Activated B cell treated with CpG ODN at 0.5 μM for 24 hours (primary cell): ENCODE measurements at regions of chr22 and their contacts with region 1.

Region 1: DNA sequence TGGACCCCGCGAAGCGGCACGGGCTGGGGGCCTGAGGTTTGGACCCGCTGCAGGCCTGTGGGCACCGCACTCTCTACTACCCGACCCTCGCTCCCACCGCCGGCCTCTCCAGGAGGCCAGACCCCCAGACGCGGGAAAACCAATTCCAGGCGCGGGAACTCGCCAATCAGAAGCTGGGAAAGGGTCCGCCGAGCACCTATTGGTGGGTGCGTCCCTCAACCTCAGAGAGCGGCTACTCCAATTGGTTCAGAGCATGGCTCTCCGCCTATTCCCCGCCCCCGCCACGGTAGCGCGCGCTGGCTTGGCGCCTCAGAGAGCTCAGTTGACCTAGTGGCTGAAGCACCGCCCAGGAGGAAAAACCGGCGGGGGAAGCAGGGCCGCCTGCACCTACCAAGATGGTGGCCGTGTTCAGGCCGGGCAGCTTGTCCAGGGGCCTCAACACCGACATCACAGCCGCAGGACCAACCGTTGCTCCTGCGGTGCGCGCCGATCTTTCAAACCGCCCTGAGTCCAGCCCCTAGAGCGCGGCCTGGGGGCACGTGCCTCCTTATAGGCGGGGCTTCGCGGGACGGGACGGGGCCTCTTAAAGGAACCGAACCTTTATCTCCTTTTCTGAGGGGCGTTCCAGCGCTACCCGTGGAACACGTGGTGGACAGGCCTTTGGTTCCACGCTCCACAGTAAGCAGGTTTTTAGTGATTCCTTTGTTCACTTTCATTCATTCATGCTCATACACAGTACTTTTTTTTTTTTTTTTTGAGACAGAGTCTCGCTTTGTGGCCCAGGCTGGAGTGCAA is at the start of gene CENPM:
- DNase-seq: peak; percentile 84
- ATAC-seq: peak; percentile 91
- H3K4me3 Mint-ChIP-seq: peak within 1 kb of the TSS; percentile 91
- H3K27ac Mint-ChIP-seq: peak within 1 kb of the TSS; percentile 80
- H3K4me1 Mint-ChIP-seq: peaks cover 52% of the 10 kb centered on the region
- H3K27me3 Mint-ChIP-seq: no peaks in the 10 kb centered on the region
- CTCF ChIP-seq: no peak
- total RNA-seq, gene CENPM: 9.6 and 13.3 TPM in 2 replicates

Region 2: DNA sequence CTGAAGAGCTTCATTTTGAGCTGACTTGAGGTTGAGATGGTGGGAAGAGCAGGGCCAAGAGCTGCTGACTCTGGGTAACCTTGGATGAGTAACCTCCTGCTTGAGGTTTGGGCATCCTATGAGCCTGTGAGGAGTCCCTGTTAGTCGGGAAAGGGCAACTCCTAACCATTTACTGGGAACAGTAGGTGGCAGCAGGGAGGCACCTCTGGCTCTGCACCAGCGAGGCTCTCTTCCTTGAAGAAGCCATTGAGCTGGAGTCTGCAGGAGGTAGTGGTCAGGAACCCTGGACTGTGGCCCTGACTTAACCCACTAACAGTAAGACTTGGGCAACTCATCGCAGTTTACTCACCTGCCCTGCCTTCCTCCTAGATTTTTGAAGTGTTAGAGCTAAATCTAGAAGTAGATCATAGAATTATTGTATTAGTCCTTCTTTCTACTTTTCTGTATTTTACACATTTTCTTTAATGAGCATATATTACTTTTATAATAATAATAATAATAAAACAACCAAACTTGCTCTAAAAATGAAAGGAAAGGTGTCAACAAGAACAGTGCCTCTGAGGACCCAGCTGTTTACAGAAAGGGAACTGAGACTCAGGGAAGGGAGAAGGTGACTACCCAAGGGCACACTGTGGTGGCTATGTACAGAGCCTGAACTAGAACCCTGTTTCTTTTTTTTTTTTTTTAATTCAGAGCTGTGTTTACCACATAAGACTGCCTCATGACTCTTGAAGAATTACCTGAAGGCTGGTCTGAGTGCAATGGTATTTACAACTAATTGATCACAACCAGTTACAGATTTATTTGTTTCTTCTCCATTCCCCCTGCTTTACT is 200.0 kb before region 1 on chr22:
- CTCF ChIA-PET with region 1: interaction called, 3 read pairs
- POLR2A ChIA-PET with region 1: no interaction called
- intact Hi-C with region 1: loop called (anchors 5 kb)
- DNase-seq: peak; percentile 18
- ATAC-seq: peak; percentile 96
- H3K4me3 Mint-ChIP-seq: peak overlapping the region; percentile 38
- H3K27ac Mint-ChIP-seq: peak overlapping the region; percentile 69
- H3K4me1 Mint-ChIP-seq: peaks cover 31% of the 10 kb centered on the region
- H3K27me3 Mint-ChIP-seq: no peaks in the 10 kb centered on the region
- CTCF ChIP-seq: no peak

Region 3: GRCh38 chr22:41816181-41816621 is 130.6 kb before region 1 on chr22:
- CTCF ChIA-PET with region 1: no interaction called
- POLR2A ChIA-PET with region 1: interaction called, 12 read pairs
- intact Hi-C with region 1: no loop called
- DNase-seq: no peak
- ATAC-seq: no peak
- H3K4me3 Mint-ChIP-seq: no peak overlapping the region
- H3K27ac Mint-ChIP-seq: no peak overlapping the region
- H3K4me1 Mint-ChIP-seq: no peaks in the 10 kb centered on the region
- H3K27me3 Mint-ChIP-seq: no peaks in the 10 kb centered on the region
- CTCF ChIP-seq: no peak

Region 4: DNA sequence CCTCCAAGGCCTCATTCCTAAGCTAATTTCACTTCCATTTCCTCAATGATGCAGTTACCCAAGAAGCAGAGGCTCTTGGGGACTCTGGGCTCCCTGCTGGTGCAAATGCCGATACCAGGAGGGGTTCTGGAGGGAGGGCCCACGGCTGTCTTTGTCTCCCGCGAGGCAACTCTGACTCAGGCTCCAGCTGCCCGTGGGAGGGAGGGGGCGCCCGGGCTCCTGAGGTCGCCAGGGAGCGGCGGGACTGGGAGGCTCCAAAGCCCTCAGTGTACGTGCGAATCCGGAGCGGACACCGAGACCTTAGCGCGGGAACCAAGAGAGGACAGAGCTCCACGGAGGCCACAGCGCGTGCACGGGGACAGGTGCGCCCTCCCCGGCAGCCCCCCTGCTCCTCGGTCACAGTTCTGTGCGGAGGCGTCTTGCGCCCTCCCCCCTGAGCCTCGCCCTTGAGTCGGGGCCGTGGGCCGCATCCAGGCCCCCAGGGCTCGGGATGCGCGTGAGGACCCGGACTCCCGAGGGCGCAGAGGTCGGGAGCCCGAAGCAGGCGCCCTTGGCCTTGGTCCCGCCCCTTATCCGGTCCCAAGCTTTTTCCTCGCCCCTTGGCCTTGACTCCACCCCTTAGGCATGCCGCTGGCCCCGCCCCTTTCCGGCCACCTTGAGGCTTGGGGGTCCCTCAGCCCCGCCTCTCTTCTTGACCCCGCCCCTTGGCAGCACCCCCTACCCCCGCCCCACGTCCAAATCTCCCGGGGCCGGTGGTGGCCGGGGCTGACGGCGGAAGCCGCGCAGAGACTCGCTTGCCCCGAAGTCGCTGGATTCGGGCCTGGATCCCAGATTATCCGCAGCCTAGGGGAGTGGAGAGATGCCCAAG is 27.2 kb before region 1 on chr22:
- CTCF ChIA-PET with region 1: interaction called, 258 read pairs
- POLR2A ChIA-PET with region 1: interaction called, 1,414 read pairs
- intact Hi-C with region 1: no loop called
- DNase-seq: peak; percentile 82
- ATAC-seq: peak; percentile 53
- H3K4me3 Mint-ChIP-seq: peak overlapping the region; percentile 82
- H3K27ac Mint-ChIP-seq: peak overlapping the region; percentile 94
- H3K4me1 Mint-ChIP-seq: peaks cover 88% of the 10 kb centered on the region
- H3K27me3 Mint-ChIP-seq: no peaks in the 10 kb centered on the region
- CTCF ChIP-seq: no peak

Region 5: GRCh38 chr22:41925655-41926460 is 21.0 kb before region 1 on chr22:
- CTCF ChIA-PET with region 1: interaction called, 258 read pairs
- POLR2A ChIA-PET with region 1: interaction called, 1,414 read pairs
- intact Hi-C with region 1: no loop called
- DNase-seq: peak; percentile 90
- ATAC-seq: peak; percentile 45
- H3K4me3 Mint-ChIP-seq: peak overlapping the region; percentile 92
- H3K27ac Mint-ChIP-seq: peak overlapping the region; percentile 94
- H3K4me1 Mint-ChIP-seq: peaks cover 83% of the 10 kb centered on the region
- H3K27me3 Mint-ChIP-seq: no peaks in the 10 kb centered on the region
- CTCF ChIP-seq: peak; percentile 26

Region 6: GRCh38 chr22:41931701-41932269 is 15.0 kb before region 1 on chr22:
- CTCF ChIA-PET with region 1: interaction called, 258 read pairs
- POLR2A ChIA-PET with region 1: interaction called, 1,414 read pairs
- intact Hi-C with region 1: no loop called
- DNase-seq: peak; percentile 72
- ATAC-seq: peak; percentile 35
- H3K4me3 Mint-ChIP-seq: peak overlapping the region; percentile 52
- H3K27ac Mint-ChIP-seq: peak overlapping the region; percentile 100
- H3K4me1 Mint-ChIP-seq: peaks cover 97% of the 10 kb centered on the region
- H3K27me3 Mint-ChIP-seq: no peaks in the 10 kb centered on the region
- CTCF ChIP-seq: no peak